PC-9 (cell line): ENCODE measurements at regions of chr3 and their contacts with region 1.

Region 1: DNA sequence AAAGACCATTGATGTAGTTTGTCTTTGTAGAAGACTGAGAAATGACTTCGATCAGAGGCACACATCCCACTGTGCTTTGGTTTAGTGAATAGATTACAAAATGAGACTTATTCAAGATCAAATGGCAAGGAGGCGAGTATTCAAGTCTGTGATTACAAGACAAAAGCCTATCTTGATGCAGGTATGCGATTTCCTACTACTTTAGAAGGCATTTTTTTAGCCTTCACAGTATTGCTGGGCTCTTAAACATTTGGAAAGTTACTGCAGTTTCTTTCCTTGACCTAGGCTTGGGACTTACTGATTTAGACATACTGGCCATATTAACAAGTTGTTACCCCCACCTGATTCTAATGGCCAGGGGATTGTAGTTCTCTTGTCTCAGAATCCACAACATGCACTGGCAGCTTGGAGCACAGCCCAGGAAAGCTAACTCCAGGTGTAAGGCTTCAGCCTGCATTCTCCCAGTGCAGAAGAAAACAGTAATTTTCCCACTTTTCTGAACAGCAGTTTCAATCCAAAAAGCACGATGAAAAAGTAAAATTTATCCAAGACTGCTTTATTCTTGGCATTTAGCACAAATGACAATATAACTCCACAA is 311.6 kb downstream of the EPHA6 start:
- DNase-seq: no peak
- H3K4me3 ChIP-seq: no peak overlapping the region
- H3K27ac ChIP-seq: no peak overlapping the region
- H3K4me1 ChIP-seq: no peaks in the 10 kb centered on the region
- H3K27me3 ChIP-seq: no peaks in the 10 kb centered on the region
- CTCF ChIP-seq: no peak

Region 2: GRCh38 chr3:96852856-96853255 is 273.1 kb before region 1 on chr3:
- CTCF ChIA-PET with region 1: no interaction called
- POLR2A ChIA-PET with region 1: interaction called, 10 read pairs
- intact Hi-C with region 1: no loop called
- DNase-seq: no peak
- H3K4me3 ChIP-seq: no peak overlapping the region
- H3K27ac ChIP-seq: no peak overlapping the region
- H3K4me1 ChIP-seq: no peaks in the 10 kb centered on the region
- H3K27me3 ChIP-seq: no peaks in the 10 kb centered on the region
- CTCF ChIP-seq: peak; percentile 19; the same call in 1 of the 2 replicates

Region 3: GRCh38 chr3:97161164-97161563 is 35.2 kb after region 1 on chr3:
- CTCF ChIA-PET with region 1: no interaction called
- POLR2A ChIA-PET with region 1: no interaction called
- intact Hi-C with region 1: no loop called
- DNase-seq: no peak
- H3K4me3 ChIP-seq: no peak overlapping the region
- H3K27ac ChIP-seq: no peak overlapping the region
- H3K4me1 ChIP-seq: no peaks in the 10 kb centered on the region
- H3K27me3 ChIP-seq: no peaks in the 10 kb centered on the region
- CTCF ChIP-seq: no peak